Activated CD4-positive, alpha-beta T cell treated with anti-CD3 and anti-CD28 coated beads for 36 hours (primary cell): ENCODE measurements at regions of chr13 and their contacts with region 1.

Region 1: DNA sequence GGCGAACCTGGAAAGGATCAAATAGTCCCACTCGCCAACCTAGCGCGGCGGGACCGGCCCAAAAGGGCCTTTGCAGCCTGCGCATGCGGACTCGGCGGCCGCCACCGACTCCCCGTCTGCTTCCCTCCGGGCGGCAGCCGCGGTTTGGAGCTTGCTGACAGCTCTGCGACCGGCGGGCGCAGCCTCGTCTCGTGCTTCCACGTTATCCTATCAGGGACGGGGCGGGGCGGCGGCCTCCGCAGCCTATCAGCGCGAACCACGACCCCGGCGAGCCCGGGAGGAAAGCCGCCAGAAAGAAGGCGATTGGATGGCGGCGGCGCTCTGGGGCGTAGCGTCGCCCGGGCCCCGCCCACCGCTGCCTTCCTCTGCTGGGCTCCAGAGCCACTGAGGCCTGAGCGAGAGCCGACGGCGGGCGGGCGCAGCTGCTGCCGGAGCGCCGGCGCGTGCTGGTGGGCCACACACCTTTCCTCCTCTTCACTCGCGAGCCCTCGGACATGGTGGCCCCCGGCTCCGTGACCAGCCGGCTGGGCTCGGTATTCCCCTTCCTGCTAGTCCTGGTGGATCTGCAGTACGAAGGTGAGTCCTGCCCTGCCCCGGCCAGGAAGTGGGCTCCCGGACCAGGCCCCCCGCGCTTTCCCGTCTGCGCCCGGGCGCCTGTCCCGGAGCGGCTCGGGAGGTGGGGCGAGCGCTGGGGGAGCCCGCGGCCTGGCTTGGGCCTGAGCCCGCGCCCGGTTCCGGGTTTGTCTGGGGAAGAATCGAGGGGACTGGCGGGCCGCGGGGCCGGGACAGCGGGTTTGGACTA is at the start of gene DNAJC3:
- DNase-seq: peak; percentile 99
- ATAC-seq: peak; percentile 96
- H3K4me3 Mint-ChIP-seq: peak within 1 kb of the TSS; percentile 96
- H3K27ac Mint-ChIP-seq: peak within 1 kb of the TSS; percentile 92
- H3K4me1 Mint-ChIP-seq: peaks cover 52% of the 10 kb centered on the region
- H3K27me3 Mint-ChIP-seq: no peaks in the 10 kb centered on the region
- total RNA-seq, gene DNAJC3: 13.4 to 16.3 TPM

Region 2: GRCh38 chr13:95703576-95703975 is 26.6 kb after region 1 on chr13:
- CTCF ChIA-PET with region 1: interaction called, 3 read pairs
- POLR2A ChIA-PET with region 1: no interaction called
- intact Hi-C with region 1: loop called in 1 of 2 experiments (anchors 2 kb)
- DNase-seq: no peak
- ATAC-seq: no peak
- H3K4me3 Mint-ChIP-seq: no peak overlapping the region
- H3K27ac Mint-ChIP-seq: no peak overlapping the region
- H3K4me1 Mint-ChIP-seq: peaks cover 70% of the 10 kb centered on the region
- H3K27me3 Mint-ChIP-seq: no peaks in the 10 kb centered on the region

Region 3: DNA sequence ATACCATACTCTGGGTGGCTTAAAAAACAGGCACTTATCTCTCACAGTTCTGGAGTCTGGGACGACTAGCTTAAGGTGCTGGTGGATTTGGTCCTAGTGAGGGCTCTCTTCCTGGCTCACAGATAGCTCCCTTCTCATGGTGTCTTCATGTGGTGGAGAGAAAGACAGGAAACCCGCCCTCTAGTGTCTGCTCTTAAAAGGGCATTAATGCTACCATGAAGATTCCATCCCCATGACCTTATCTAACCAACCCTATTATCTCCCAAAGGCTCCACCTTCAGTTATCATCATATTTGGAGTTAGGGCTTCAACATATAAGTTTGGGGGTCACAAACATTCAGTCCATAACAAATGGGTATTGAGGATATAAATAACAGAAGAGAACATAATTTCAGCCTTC is 552.4 kb after region 1 on chr13:
- CTCF ChIA-PET with region 1: no interaction called
- POLR2A ChIA-PET with region 1: no interaction called
- intact Hi-C with region 1: no loop called
- DNase-seq: no peak
- ATAC-seq: no peak
- H3K4me3 Mint-ChIP-seq: no peak overlapping the region
- H3K27ac Mint-ChIP-seq: no peak overlapping the region
- H3K4me1 Mint-ChIP-seq: no peaks in the 10 kb centered on the region
- H3K27me3 Mint-ChIP-seq: no peaks in the 10 kb centered on the region